ENCODE measurements at regions of chr6 and their contacts with region 1.

Region 1: DNA sequence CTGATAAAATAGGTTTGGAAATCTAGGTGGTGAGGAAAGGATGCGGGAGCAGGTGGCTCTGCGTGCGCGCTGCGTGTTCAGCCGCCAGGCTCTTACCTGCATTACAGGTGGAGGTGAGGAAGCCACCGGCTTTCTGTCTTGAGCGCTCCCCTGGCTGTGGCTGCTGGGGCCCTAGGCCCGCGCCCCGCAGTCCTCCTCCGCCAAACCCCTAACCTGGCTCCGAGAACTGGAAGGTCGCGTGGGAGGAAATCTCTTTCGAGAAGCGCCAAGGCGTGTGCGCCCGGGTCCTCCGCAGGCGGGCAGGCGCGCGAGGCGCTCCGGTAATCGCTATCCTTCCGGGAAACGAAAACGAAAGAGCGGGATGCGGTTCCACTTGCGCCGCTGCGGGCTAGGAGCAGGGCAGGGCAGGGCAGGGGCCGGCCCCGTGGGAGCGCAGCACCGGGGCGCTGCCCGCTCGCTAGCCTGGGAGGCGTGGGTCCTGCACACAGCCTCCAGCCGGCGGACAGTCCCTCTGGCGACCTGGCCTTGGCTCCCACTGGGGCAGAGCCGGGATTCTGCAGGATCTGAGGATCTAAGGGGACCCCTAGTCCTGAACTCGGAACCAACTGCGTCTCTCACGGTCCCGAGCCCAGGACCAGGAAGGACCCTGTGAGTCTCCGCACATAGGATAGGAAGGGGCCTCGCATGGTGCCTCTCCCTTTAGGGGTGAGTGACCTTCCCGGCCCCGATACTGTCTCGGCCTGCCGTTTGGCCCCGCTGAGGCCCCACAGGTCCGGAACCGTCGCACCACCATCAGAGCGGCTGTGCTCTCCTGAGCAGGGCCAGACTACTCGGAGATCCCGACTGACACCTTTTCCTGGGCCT is at the start of gene ETV7:
- DNase-seq: peak; percentile 53
- H3K27ac ChIP-seq: peak within 1 kb of the TSS; percentile 32
- CTCF ChIP-seq: no peak

Region 2: GRCh38 chr6:36104836-36105235 is 282.8 kb before region 1 on chr6:
- CTCF ChIA-PET with region 1: interaction called, 10 read pairs
- POLR2A ChIA-PET with region 1: no interaction called
- DNase-seq: no peak
- H3K27ac ChIP-seq: no peak overlapping the region
- CTCF ChIP-seq: no peak

Region 3: GRCh38 chr6:36114798-36115408 is 272.8 kb before region 1 on chr6:
- CTCF ChIA-PET with region 1: no interaction called
- POLR2A ChIA-PET with region 1: no interaction called
- DNase-seq: no peak
- H3K27ac ChIP-seq: no peak overlapping the region
- CTCF ChIP-seq: no peak